ENCODE measurements at regions of chr2 and their contacts with region 1.

Region 1: GRCh38 chr2:25342372-25343186 is 854 bp upstream of the DNMT3A start:
- DNase-seq: peak; percentile 81
- H3K4me3 Mint-ChIP-seq: peak overlapping the region; percentile 83
- H3K27ac Mint-ChIP-seq: peak overlapping the region; percentile 78
- H3K4me1 Mint-ChIP-seq: peaks cover 30% of the 10 kb centered on the region
- H3K27me3 Mint-ChIP-seq: no peaks in the 10 kb centered on the region

Region 2: GRCh38 chr2:25304321-25304720 is 38.3 kb before region 1 on chr2:
- intact Hi-C with region 1: no loop called
- DNase-seq: no peak
- H3K4me3 Mint-ChIP-seq: no peak overlapping the region
- H3K27ac Mint-ChIP-seq: no peak overlapping the region
- H3K4me1 Mint-ChIP-seq: peaks cover 49% of the 10 kb centered on the region
- H3K27me3 Mint-ChIP-seq: no peaks in the 10 kb centered on the region

Region 3: DNA sequence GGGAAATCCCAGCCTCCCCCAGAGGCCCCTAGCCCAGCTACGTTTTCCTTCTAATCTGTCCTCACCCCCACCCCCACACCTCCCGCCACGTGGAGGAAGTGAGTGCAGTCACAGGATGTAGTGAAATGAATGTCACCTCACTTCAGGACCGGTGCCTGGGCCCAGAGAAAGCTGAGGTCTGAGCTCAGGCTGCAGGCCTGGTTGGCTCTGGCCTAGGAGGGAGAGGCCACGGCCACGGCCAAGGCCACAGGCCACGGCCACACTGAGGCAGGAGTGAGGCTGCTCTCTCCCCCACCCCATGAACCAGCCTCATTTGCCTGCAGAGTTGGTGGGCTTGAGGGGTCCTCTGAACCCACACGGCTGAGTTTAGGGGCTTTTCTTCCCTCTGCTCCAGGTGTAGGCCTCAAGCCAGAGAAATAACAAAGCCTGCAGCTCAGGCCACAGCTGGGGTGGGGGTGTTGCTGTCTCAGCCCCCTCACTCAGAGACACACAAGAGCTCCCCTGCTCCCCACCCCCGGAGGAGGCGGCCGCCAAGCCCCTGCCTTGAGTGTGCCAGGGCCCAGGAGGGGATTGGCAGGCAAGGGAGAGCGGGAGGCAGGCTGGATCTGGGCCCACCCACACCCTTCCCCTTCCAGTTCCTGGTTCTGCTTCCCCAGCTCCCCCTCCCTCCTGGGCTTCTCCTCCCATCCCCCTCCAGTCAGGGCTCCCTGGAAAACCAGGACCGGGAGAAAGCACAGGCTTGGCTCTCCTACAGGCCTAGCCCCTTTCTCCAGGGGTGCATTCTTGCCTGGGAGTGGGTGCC is 27.9 kb before region 1 on chr2:
- intact Hi-C with region 1: loop called (anchors 2 kb)
- DNase-seq: peak; percentile 72
- H3K4me3 Mint-ChIP-seq: peak overlapping the region; percentile 86
- H3K27ac Mint-ChIP-seq: peak overlapping the region; percentile 97
- H3K4me1 Mint-ChIP-seq: peaks cover 53% of the 10 kb centered on the region
- H3K27me3 Mint-ChIP-seq: no peaks in the 10 kb centered on the region

Region 4: DNA sequence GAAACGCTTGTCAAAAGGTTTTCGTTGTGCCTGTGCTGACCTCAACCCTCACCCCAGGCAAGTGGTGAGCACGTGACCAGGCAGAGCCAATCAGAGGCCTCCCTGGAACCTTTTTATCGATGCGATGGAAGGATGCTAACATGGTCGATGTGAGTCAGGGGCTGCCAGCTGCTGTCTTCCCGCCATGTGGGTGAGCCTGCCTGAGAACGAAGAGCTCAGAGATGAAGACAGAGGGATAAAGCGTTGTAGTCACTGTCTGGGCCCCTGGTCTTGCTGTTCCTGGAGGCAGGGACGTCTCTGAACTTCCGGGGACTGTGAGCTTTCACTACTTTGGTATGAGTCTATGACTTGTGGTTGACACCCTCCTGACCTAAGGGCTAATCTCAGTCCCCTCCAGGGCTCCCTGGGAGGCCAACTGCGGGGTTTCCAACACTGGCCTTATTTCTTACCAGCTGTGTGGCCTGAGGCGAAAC is 19.5 kb before region 1 on chr2:
- intact Hi-C with region 1: loop called (anchors 2 kb)
- DNase-seq: no peak
- H3K4me3 Mint-ChIP-seq: peak overlapping the region; percentile 72
- H3K27ac Mint-ChIP-seq: peak overlapping the region; percentile 96
- H3K4me1 Mint-ChIP-seq: peaks cover 45% of the 10 kb centered on the region
- H3K27me3 Mint-ChIP-seq: no peaks in the 10 kb centered on the region

Region 5: DNA sequence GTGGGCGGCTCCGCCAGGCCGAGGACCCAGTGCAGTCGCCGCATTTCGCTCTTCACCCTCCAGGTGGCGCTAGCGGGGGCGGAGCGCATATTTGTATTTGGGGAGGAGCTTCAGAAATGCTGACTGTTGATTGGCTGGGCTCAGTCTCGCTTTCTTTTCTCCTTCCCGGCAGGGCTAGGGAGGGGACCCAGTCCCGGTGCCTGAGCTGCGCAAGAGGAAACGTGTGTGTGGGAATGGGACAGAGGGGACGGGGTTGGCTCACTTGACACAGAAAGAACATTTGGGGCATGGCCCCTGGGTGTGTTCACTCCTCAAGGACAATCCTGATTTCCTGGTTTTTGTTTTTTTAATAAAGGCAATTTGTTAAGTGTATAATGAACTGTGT is 19.5 kb after region 1 on chr2:
- intact Hi-C with region 1: loop called (anchors 1 kb)
- DNase-seq: peak; percentile 93
- H3K4me3 Mint-ChIP-seq: peak overlapping the region; percentile 81
- H3K27ac Mint-ChIP-seq: peak overlapping the region; percentile 92
- H3K4me1 Mint-ChIP-seq: peaks cover 8% of the 10 kb centered on the region
- H3K27me3 Mint-ChIP-seq: no peaks in the 10 kb centered on the region

Region 6: DNA sequence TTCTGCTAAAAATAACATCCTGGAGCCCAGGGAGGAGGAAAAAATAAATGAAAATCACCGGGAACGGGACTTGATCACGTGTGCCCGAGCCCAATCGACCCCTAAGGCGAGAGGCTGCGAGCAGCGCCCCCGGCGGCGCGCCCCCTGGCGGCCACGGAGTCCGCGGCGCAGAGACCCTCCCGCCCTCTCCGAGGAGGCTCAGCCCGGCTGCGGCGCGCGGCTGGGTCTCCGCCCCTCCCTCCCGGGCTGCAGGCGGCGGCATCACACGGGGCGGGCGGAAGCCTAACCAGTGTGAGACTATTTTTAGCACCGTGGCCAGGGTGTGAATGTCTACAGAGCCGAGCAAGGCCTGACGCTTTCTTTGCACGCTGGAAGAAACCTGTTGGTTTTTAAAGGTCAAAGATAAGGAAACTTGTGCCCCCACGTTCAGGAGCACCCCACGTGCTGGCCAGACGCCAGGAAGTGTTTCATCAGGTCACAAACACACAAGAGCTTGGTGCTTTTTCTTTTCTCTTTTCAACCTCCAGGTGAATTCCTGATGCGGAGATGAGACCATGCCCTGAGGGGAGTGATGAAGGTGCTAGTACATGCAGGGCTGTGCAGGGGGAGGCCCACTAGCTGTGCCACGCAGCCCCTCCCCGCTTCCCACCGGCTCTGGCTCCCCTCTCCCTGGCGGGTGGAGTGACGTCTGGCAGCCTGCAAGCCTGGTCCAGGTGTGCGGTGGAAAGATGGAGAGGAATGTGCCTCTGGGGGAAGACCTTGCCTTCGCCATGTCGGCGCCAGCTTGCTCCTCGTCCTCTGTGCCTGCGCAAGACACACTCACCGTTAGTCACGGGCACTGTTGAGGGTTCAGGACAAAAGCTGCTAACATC is 34.4 kb after region 1 on chr2:
- intact Hi-C with region 1: loop called (anchors 1 kb)
- DNase-seq: peak; percentile 90
- H3K4me3 Mint-ChIP-seq: peak overlapping the region; percentile 62
- H3K27ac Mint-ChIP-seq: peak overlapping the region; percentile 98
- H3K4me1 Mint-ChIP-seq: peaks cover 30% of the 10 kb centered on the region
- H3K27me3 Mint-ChIP-seq: no peaks in the 10 kb centered on the region

Region 7: GRCh38 chr2:25521665-25522387 is 179.2 kb after region 1 on chr2:
- intact Hi-C with region 1: loop called (anchors 2 kb)
- DNase-seq: peak; percentile 26
- H3K4me3 Mint-ChIP-seq: peak overlapping the region; percentile 17
- H3K27ac Mint-ChIP-seq: peak overlapping the region; percentile 50
- H3K4me1 Mint-ChIP-seq: peaks cover 20% of the 10 kb centered on the region
- H3K27me3 Mint-ChIP-seq: no peaks in the 10 kb centered on the region

Measured in activated T-helper 2 cell treated with anti-CD3 and anti-CD28 coated beads, Interferon-gamma antibody, Interleukin-2, Interleukin-4, amounts not matched to agents 10 μg/mL and 5 μg/mL and 100 μg/mL, durations not matched to agents 14 hours and 24 hours and 36 hours (primary cell).